Common myeloid progenitor, CD34-positive (primary cell): ENCODE measurements at regions of chr1 and their contacts with region 1.

Region 1: DNA sequence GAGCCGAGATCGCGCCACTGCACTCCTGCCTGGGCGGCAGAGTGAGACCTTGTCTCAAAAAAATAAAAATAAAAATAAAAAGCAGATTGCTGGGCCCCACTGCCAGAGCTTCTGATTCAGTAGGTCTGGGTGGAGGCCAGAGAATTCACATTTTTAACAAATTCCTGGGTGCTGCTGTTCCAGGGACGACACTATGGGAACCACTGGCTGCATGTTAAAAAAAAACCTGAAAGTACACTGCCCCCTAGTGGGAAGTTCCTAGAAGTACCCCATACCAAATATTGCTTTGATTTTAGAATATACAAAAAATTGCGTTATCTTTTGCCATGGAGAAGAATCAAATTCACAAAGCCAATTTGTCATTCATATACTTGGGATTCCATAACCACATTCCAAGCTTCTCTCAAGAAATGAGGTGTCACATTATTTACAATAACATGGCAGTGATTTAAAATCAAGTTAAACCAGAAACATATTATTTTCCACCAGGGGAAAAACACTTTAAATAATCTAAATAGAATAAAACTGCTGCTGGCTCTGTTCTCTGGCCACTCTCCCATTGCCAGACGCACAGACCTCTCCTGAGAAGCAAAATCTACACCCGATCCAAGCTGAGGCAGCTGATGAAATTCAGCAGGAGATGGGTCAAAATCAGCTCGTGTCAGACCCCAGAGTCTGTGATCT is 27.4 kb downstream of the SYF2 start:
- DNase-seq: peak; percentile 47 to 70 (median 65)
- H3K4me3 ChIP-seq: no peak overlapping the region
- H3K27ac ChIP-seq: no peak overlapping the region
- H3K4me1 ChIP-seq: no peaks in the 10 kb centered on the region
- H3K27me3 ChIP-seq: no peaks in the 10 kb centered on the region

Region 2: DNA sequence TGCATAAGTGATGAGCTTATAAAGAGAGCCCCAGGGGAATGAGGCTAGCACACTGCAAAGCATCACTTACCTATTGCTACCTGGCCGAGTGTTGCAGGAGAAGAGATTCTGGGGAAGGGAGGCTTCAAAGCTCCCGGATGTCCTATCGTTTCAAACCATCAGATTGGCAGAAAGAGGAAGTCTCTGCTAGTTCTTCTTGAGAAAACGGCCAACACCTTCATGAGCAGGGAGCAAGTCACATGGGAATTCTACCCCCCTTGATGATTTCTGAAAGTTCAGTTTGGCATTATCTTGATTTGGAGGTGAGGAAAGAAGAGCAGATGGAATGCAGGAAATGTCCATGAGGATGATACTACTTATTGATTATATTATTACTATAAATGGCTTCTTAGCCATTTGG is 11.2 kb after region 1 on chr1:
- CTCF ChIA-PET with region 1: interaction called, 11 read pairs
- POLR2A ChIA-PET with region 1: no interaction called
- DNase-seq: peak; percentile 19 to 63 (median 44)
- H3K4me3 ChIP-seq: no peak overlapping the region
- H3K27ac ChIP-seq: no peak overlapping the region
- H3K4me1 ChIP-seq: peaks cover 0 to 14% (median 12%) of the 10 kb centered on the region in 4 experiments
- H3K27me3 ChIP-seq: no peaks in the 10 kb centered on the region